ENCODE measurements at regions of chr11 and their contacts with region 1.

Region 1: GRCh38 chr11:78416305-78417178 is 1.1 kb downstream of the GAB2 start:
- DNase-seq: peak; percentile 82
- CTCF ChIP-seq: peak; percentile 73

Region 2: DNA sequence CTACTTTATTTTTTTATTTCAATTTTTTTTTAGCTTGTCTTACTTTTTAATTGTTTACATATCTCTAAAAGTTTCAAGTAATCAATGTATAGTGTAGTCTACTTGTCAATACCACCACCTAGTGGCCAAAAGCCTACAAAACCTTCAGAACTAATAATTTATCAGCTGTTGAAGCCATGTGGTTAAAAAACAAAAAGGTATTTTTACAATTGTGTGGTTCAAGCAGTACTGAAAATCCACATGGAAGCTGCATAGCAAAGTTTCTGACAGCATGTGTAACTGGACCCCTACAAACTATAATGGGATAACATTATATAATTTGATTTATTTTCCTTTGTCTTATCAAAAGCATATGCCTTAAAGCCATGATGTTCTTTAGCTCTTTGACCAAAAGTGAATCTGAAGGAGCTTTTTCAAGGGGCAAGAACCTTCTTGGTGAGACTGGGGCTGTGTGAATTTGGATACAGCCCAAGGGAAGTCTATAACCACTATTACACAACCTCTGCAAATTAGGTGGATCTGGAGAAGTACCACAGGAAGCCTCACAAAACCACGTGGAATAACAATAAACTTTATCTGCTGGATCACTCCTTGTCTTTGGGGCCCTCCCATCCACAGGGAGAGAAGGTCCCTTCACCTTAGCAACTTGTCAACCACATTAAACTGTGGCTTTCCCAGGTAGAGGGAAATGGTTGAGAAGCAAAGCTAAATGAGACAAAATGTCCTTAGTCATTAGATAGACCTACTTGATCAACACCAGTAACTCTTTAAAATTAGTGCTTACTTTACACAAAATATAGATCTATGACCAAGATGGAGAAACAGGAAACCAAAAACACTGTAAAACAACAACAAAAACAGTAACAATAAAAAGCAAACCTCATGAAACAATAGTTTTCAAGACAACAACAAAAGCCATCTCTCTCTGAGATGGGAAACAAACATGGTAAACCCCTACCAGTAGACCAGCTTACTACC is 148.2 kb after region 1 on chr11:
- in situ Hi-C with region 1: loop called (anchors 5 kb)
- DNase-seq: peak; percentile 32
- CTCF ChIP-seq: peak; percentile 38

Region 3: DNA sequence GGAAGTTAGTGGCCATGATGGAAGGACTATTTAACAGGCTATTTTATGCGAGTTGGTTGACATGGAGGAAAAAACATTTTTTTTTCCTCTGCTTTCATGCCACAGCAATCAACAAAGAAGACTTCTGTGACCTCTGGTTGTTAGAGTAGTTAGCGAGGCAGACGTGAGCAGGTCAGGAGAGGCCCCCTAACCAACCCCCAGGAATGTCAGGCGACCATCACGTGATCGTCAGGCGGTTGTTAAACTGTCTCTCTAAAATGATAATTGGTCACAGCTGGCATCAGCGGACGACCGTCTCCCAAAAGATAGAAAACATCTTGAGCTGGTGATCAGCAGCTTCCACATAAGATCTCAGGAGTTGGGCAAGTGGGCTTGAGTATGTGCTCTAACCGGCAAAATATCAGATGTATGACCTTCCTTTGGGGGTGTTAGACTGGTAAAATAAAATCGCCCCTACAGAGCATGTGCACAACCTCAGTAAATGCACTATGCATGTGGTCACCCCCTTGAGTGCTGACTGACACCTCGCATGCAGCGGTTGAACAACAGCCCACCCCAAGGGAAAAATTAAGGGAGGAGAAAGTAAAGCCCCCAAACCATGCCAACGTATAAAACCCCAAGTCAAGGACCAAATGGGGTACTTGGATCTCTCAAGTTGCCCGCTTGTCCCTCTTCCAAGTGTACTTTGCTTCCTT is 179.0 kb after region 1 on chr11:
- in situ Hi-C with region 1: no loop called
- DNase-seq: no peak
- CTCF ChIP-seq: no peak

Region 4: GRCh38 chr11:78684377-78684776 is 267.8 kb after region 1 on chr11:
- in situ Hi-C with region 1: no loop called
- DNase-seq: no peak
- CTCF ChIP-seq: no peak

Region 5: DNA sequence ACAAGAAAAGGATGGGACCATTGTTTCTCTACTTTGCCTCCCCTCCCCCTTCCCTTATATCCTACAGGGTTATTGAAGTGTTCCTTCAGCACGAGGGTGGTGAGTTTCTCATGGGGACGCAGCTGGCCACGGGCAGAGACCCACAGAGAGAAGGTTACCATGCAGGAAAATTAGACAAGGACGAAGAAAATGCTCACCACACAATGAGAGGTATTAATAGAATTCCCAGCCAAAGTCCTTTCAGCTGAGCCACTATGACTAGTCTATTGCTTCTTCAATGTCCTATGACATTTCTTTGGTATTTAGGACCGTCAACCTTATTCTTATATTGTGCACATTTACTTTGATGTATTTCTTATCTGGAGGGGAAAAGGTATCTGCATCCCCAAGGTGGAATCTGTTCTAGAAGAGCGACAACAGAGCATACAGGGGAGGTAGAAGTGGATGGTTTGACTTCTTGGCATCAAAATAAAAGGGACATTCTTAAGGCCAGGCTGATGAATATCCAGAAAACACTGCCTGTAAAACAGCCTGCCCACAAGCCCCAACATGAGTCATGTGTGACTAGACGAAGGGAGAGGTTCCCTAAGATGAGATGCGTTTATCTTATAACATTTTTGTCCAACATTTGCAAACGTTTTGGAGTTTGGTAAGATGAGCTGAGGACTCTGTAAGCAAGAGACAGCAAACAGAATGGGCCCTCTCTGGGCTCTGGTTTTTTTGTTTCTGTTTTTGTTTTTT is 367.9 kb after region 1 on chr11:
- in situ Hi-C with region 1: no loop called
- DNase-seq: no peak
- CTCF ChIP-seq: no peak

Measured in GM13976 (cell line).